ENCODE measurements at regions of chr5 and their contacts with region 1.

Region 1: GRCh38 chr5:124706729-124707361 is 39.6 kb downstream of the ZNF608 start:
- DNase-seq: peak in 4 of 5 donors; percentile 61 to 74 (median 66)
- ATAC-seq: peak; percentile 33 to 74 (median 70)
- H3K4me3 ChIP-seq: peak overlapping the region in 8 of 12 donors; percentile 2 to 26 (median 10)
- H3K27ac ChIP-seq: peak overlapping the region in 7 of 12 donors; percentile 11 to 53 (median 35)
- H3K4me1 ChIP-seq: peaks cover 6 to 78% (median 51%) of the 10 kb centered on the region in 12 donors
- H3K27me3 ChIP-seq: no peaks in the 10 kb centered on the region
- CTCF ChIP-seq: no peak
- POLR2A ChIP-seq: no peak

Region 2: DNA sequence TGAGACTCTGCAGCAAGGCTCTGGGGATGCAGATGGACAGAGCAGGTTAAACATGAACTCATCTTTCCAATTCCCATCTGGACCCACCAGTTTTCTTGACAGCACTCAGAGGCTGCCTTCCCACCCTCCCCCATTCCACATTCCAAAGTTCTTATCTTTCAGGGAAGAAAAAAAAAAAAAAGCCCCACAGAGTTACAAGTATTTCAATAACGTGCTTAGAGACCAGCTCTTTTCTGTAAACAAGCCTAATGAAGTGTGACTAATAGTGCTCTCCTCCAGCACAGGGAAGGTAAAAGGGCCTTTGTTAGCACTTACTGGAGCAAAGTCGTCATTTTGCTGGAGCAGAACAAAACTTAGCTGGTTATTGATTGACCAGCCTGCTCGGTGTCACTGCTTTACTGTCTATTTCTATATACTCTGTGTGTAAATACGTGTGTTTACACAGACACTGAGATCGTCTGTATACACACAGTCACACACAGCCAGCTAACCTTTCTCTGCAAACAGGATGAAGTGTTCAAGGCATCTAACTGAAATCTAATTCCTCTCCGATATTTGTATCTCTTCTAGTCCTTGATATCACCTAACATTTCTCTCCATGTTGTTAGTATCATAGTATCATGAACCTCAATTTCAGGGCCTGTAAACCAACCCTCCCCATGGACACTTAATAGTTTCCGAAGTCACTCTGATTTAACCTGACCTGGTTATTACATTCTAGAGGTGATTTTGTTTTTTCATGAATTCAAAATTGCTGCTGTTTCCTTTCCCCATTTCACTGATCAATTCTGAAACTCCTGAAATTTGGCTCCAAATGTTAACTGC is 45.3 kb before region 1 on chr5:
- intact Hi-C with region 1: loop called in 1 of 10 experiments (anchors 5 kb)
- DNase-seq: no peak
- ATAC-seq: peak in 3 of 4 donors; percentile 51 to 81 (median 62)
- H3K4me3 ChIP-seq: no peak overlapping the region
- H3K27ac ChIP-seq: peak overlapping the region in 5 of 12 donors; percentile 17 to 59 (median 41)
- H3K4me1 ChIP-seq: peaks cover 0 to 92% (median 41%) of the 10 kb centered on the region in 12 donors
- H3K27me3 ChIP-seq: peaks cover 0 to 18% (median 0%) of the 10 kb centered on the region in 9 donors
- CTCF ChIP-seq: no peak
- POLR2A ChIP-seq: no peak